Colonic mucosa (tissue), 4 donors: ENCODE measurements at regions of chr7 and their contacts with region 1.

Region 1: DNA sequence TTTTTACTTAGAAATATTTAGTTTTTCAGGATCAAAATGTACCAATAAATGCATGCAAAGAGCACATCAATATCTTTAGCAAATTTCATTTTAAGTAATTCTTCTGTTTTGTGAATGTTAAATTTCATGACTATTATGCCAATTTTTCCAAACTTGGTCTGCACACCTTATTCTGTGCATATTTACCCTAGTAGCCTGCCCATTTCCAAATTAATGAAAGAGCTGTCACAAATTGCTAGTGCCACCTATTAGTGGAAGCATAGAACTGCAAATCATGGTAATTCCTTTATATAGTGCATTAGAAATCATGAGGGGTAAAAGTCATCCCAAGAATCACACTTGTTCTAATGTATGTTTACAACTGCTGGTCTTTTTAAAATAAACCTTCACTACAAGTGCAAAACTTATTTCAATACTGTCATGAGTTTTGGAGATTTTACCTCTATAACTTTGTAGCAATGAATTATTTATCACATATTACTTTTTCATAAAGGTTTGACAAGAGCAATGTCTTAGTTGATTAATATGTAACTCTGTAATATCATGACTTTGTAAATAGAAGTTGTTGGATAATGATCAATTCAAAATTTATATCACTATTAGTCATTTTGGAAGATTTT is 5.7 kb downstream of the SEMA3A start:
- DNase-seq: no peak
- H3K4me3 ChIP-seq: no peak overlapping the region
- H3K27ac ChIP-seq: no peak overlapping the region
- H3K4me1 ChIP-seq: no peaks in the 10 kb centered on the region
- H3K27me3 ChIP-seq: no peaks in the 10 kb centered on the region
- CTCF ChIP-seq: no peak

Region 2: GRCh38 chr7:83976295-83976694 is 212.6 kb before region 1 on chr7:
- intact Hi-C with region 1: loop called (anchors 10 kb)
- DNase-seq: no peak
- H3K4me3 ChIP-seq: no peak overlapping the region
- H3K27ac ChIP-seq: no peak overlapping the region
- H3K4me1 ChIP-seq: no peaks in the 10 kb centered on the region
- H3K27me3 ChIP-seq: no peaks in the 10 kb centered on the region
- CTCF ChIP-seq: peak; percentile 54